Endothelial cell of umbilical vein (primary cell): ENCODE measurements at regions of chr6 and their contacts with region 1.

Region 1: GRCh38 chr6:24431045-24431451 is 28.3 kb downstream of the MRS2 start:
- DNase-seq: peak; percentile 55
- H3K4me3 ChIP-seq: no peak overlapping the region
- H3K27ac ChIP-seq: no peak overlapping the region
- H3K4me1 ChIP-seq: no peaks in the 10 kb centered on the region
- H3K27me3 ChIP-seq: no peaks in the 10 kb centered on the region
- CTCF ChIP-seq: peak; percentile 50 to 60
- POLR2A ChIP-seq: no peak

Region 2: GRCh38 chr6:24415753-24416152 is 15.3 kb before region 1 on chr6:
- CTCF ChIA-PET with region 1: no interaction called
- POLR2A ChIA-PET with region 1: no interaction called
- dilution Hi-C with region 1: no loop called
- intact Hi-C with region 1: no loop called
- DNase-seq: no peak
- H3K4me3 ChIP-seq: no peak overlapping the region
- H3K27ac ChIP-seq: no peak overlapping the region
- H3K4me1 ChIP-seq: no peaks in the 10 kb centered on the region
- H3K27me3 ChIP-seq: no peaks in the 10 kb centered on the region
- CTCF ChIP-seq: no peak
- POLR2A ChIP-seq: no peak

Region 3: DNA sequence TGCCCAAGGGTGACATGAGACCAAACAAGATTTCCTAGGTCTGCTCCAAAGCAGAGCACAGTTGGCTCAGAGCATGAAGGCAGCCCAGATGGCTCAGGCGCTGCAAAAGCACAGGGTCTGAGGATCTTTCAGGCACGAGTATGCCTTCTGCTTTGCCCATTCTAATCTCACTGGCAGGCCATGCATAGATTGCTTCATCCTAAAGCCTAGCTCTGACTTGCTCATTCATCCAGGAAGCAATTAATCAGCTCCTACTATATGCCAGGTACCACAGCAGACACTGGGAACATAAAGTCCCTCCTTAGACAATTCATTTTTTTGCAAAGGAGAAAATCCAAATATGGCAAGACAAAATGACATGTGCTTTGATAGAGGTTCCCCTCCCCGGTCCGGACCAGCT is 27.1 kb after region 1 on chr6:
- CTCF ChIA-PET with region 1: no interaction called
- POLR2A ChIA-PET with region 1: no interaction called
- dilution Hi-C with region 1: no loop called
- intact Hi-C with region 1: no loop called
- DNase-seq: no peak
- H3K4me3 ChIP-seq: no peak overlapping the region
- H3K27ac ChIP-seq: no peak overlapping the region
- H3K4me1 ChIP-seq: no peaks in the 10 kb centered on the region
- H3K27me3 ChIP-seq: no peaks in the 10 kb centered on the region
- CTCF ChIP-seq: no peak
- POLR2A ChIP-seq: no peak

Region 4: DNA sequence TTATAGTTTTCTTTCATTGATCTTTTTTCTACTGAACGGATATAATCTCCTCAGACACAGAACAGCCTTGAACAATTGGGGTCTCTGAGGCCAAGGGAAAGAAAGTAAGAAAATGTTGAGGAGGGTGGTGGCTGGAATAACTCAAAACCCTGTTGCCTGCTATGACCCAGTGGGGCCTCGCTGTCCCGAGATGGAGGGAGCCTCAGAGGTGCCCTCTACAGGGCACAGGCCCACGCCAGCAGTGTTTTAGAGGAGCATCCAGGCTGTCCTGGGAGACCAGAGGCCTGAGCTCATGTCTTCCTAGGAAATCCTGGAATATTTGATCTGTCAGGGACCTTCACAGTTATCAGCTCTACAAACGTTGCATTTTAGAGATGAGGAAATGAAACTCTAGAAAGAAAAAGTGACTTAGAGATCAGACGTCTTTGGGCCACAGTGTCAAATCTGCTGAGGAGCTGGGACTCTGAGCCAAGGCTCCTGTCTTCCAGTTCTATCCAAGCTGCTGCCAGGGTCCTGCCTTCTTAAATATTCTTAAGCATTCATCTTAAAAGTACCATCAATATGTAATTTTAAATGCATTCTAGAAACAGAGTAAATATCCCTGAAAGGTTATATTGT is 90.0 kb after region 1 on chr6:
- CTCF ChIA-PET with region 1: interaction called, 10 read pairs
- POLR2A ChIA-PET with region 1: no interaction called
- dilution Hi-C with region 1: no loop called
- intact Hi-C with region 1: loop called (anchors 1 kb)
- DNase-seq: peak; percentile 28
- H3K4me3 ChIP-seq: no peak overlapping the region
- H3K27ac ChIP-seq: no peak overlapping the region
- H3K4me1 ChIP-seq: no peaks in the 10 kb centered on the region
- H3K27me3 ChIP-seq: no peaks in the 10 kb centered on the region
- CTCF ChIP-seq: peak; percentile 60 to 78
- POLR2A ChIP-seq: no peak

Region 5: GRCh38 chr6:24766680-24767462 is 335.8 kb after region 1 on chr6:
- CTCF ChIA-PET with region 1: no interaction called
- POLR2A ChIA-PET with region 1: no interaction called
- dilution Hi-C with region 1: no loop called
- intact Hi-C with region 1: loop called (anchors 2 kb)
- DNase-seq: peak; percentile 44
- H3K4me3 ChIP-seq: no peak overlapping the region
- H3K27ac ChIP-seq: no peak overlapping the region
- H3K4me1 ChIP-seq: no peaks in the 10 kb centered on the region
- H3K27me3 ChIP-seq: no peaks in the 10 kb centered on the region
- CTCF ChIP-seq: peak; percentile 17 to 31
- POLR2A ChIP-seq: no peak